CD8-positive, alpha-beta memory T cell (primary cell): ENCODE measurements at regions of chr3 and their contacts with region 1.

Region 1: GRCh38 chr3:58491506-58492402 is at the start of gene KCTD6:
- DNase-seq: peak; percentile 79 to 87 (median 85)
- H3K4me3 ChIP-seq: peak within 1 kb of the TSS; percentile 88
- H3K4me3 Mint-ChIP-seq: peak within 1 kb of the TSS; percentile 86 to 99 (median 92)
- H3K27ac ChIP-seq: peak within 1 kb of the TSS; percentile 53
- H3K27ac Mint-ChIP-seq: peak within 1 kb of the TSS; percentile 74 to 96 (median 92)
- H3K4me1 ChIP-seq: peaks cover 40% of the 10 kb centered on the region
- H3K4me1 Mint-ChIP-seq: peaks cover 64 to 74% (median 71%) of the 10 kb centered on the region in 3 donors
- H3K27me3 ChIP-seq: no peaks in the 10 kb centered on the region
- H3K27me3 Mint-ChIP-seq: no peaks in the 10 kb centered on the region
- total RNA-seq, gene KCTD6: 5.5 to 5.9 TPM

Region 2: GRCh38 chr3:58324391-58325390 is 167.1 kb before region 1 on chr3:
- CTCF ChIA-PET with region 1: interaction called, 14 read pairs
- POLR2A ChIA-PET with region 1: no interaction called
- DNase-seq: no peak
- H3K4me3 ChIP-seq: no peak overlapping the region
- H3K4me3 Mint-ChIP-seq: no peak overlapping the region
- H3K27ac ChIP-seq: no peak overlapping the region
- H3K27ac Mint-ChIP-seq: peak overlapping the region; percentile 43 to 86 (median 52)
- H3K4me1 ChIP-seq: peaks cover 7% of the 10 kb centered on the region
- H3K4me1 Mint-ChIP-seq: peaks cover 3 to 26% (median 14%) of the 10 kb centered on the region in 3 donors
- H3K27me3 ChIP-seq: no peaks in the 10 kb centered on the region
- H3K27me3 Mint-ChIP-seq: no peaks in the 10 kb centered on the region

Region 3: DNA sequence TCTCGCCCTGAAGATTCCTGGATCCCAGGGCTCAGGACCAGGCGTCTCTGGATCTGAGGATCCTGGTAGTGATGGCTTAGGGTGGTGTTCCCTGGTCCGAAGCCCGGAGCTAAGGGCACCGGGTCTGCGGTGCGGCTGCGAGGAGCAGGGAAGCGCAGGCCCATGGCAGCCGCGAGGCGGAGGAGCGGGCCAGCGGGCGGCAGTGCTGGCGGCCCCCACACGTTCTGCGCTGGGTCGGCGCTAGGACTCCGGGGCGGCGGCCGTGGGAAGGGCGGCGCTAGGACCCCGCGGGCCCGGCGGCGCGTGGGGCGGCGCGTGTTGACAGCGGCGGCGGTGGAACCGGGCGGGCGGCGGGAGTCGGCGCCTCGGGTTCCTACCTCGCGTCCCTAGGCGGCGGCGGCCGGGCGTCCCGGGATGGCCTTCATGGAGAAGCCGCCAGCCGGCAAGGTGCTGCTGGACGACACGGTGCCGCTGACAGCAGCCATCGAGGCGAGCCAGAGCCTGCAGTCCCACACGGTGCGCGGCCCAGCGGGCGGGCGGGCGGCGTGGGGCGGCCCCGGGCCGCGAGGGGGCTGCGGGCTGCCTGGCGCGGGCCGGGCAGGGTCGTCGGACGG is 159.1 kb before region 1 on chr3 and contains the start of gene PXK:
- CTCF ChIA-PET with region 1: interaction called, 31 read pairs
- POLR2A ChIA-PET with region 1: interaction called, 9 read pairs
- DNase-seq: peak; percentile 68 to 82 (median 80)
- H3K4me3 ChIP-seq: peak within 1 kb of the TSS; percentile 77
- H3K4me3 Mint-ChIP-seq: peak within 1 kb of the TSS; percentile 95 to 100 (median 100)
- H3K27ac ChIP-seq: peak within 1 kb of the TSS; percentile 3
- H3K27ac Mint-ChIP-seq: peak within 1 kb of the TSS; percentile 55 to 97 (median 95)
- H3K4me1 ChIP-seq: peaks cover 16% of the 10 kb centered on the region
- H3K4me1 Mint-ChIP-seq: peaks cover 34 to 50% (median 45%) of the 10 kb centered on the region in 3 donors
- H3K27me3 ChIP-seq: no peaks in the 10 kb centered on the region
- H3K27me3 Mint-ChIP-seq: no peaks in the 10 kb centered on the region
- total RNA-seq, gene PXK: 24.8 to 27.2 TPM

Region 4: DNA sequence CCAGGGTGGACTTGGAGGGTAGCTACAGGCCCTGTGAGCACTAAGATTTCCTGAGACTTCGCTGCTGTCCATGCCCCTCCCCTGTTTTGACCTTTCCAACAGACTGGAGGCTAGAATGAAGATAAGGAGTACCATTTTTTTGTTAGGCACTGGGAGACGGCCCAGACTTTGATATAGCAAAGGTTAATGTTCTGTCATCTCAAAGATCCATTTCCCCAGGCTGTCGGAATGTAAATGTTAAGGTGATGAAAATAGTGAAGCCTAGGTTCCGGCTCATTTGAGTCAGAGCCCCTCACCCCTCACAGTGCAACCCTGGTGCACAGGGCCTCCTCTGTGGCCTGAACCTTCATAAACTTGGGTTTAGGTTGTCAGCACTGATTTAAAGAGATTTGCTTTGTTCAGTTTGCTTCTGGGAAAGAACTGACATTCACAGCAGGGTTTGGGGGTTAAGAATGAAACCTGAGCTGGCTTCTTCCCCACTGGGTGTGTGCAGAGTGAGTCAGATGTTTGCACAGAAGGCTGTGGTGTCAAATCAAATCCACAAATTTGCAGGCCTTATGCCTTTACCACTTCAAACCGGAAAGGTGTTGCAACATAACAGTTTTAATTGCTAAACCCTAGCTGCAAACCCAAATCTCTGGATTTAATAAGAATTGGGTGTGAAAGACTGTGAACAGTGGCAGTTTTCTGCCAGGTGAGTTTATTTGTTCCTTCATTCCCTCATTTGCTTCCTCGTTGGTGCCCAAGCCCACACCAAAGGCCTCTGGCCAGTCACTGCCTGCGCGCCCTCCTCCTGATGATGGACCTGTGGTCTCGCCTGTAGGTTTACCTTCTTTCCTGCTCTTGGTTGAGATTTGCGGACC is 20.5 kb before region 1 on chr3:
- CTCF ChIA-PET with region 1: interaction called, 57 read pairs
- POLR2A ChIA-PET with region 1: interaction called, 8 read pairs
- DNase-seq: peak in 2 of 5 donors; percentile 64 to 72
- H3K4me3 ChIP-seq: no peak overlapping the region
- H3K4me3 Mint-ChIP-seq: peak overlapping the region; percentile 8 to 81 (median 69)
- H3K27ac ChIP-seq: peak overlapping the region; percentile 22
- H3K27ac Mint-ChIP-seq: peak overlapping the region; percentile 49 to 95 (median 88)
- H3K4me1 ChIP-seq: peaks cover 26% of the 10 kb centered on the region
- H3K4me1 Mint-ChIP-seq: peaks cover 48 to 59% (median 48%) of the 10 kb centered on the region in 3 donors
- H3K27me3 ChIP-seq: no peaks in the 10 kb centered on the region
- H3K27me3 Mint-ChIP-seq: no peaks in the 10 kb centered on the region